Motor neuron (in vitro differentiated cells): ENCODE measurements at regions of chr11 and their contacts with region 1.

Region 1: GRCh38 chr11:102831489-102832440 is 11.6 kb downstream of the MMP3 start:
- ATAC-seq: peak in 3 of 8 experiments; percentile 83 to 91 (median 90)
- H3K4me3 ChIP-seq: no peak overlapping the region
- H3K27ac ChIP-seq: no peak overlapping the region
- H3K4me1 ChIP-seq: no peaks in the 10 kb centered on the region

Region 2: GRCh38 chr11:101848262-101848661 is 983.5 kb before region 1 on chr11:
- in situ Hi-C with region 1: no loop called
- ATAC-seq: no peak
- H3K4me3 ChIP-seq: no peak overlapping the region
- H3K27ac ChIP-seq: no peak overlapping the region
- H3K4me1 ChIP-seq: no peaks in the 10 kb centered on the region

Region 3: GRCh38 chr11:102940714-102941588 is 109.2 kb after region 1 on chr11:
- in situ Hi-C with region 1: loop called in 1 of 9 experiments (anchors 10 kb)
- ATAC-seq: peak in 3 of 8 experiments; percentile 84 to 96 (median 89)
- H3K4me3 ChIP-seq: no peak overlapping the region
- H3K27ac ChIP-seq: no peak overlapping the region
- H3K4me1 ChIP-seq: no peaks in the 10 kb centered on the region

Region 4: GRCh38 chr11:102955624-102956023 is 123.9 kb after region 1 on chr11 and contains the start of gene MMP13:
- in situ Hi-C with region 1: no loop called
- ATAC-seq: no peak
- H3K4me3 ChIP-seq: no peak within 1 kb of the TSS
- H3K27ac ChIP-seq: no peak within 1 kb of the TSS
- H3K4me1 ChIP-seq: no peaks in the 10 kb centered on the region
- total RNA-seq, gene MMP13: 0.20 to 1.2 (median 0.66) TPM in 3 of 8 experiments, not detected in the others

Region 5: GRCh38 chr11:103035791-103036434 is 204.1 kb after region 1 on chr11:
- in situ Hi-C with region 1: loop called in 1 of 9 experiments (anchors 25 kb)
- ATAC-seq: peak in 4 of 8 experiments; percentile 39 to 96 (median 83)
- H3K4me3 ChIP-seq: no peak overlapping the region
- H3K27ac ChIP-seq: no peak overlapping the region
- H3K4me1 ChIP-seq: no peaks in the 10 kb centered on the region

Region 6: GRCh38 chr11:103108933-103109817 is 277.4 kb after region 1 on chr11 and contains the start of gene DYNC2H1:
- in situ Hi-C with region 1: no loop called
- ATAC-seq: peak; percentile 91 to 99 (median 99)
- H3K4me3 ChIP-seq: peak within 1 kb of the TSS; percentile 51 to 60 (median 58)
- H3K27ac ChIP-seq: peak within 1 kb of the TSS; percentile 5 to 40
- H3K4me1 ChIP-seq: peaks cover 5 to 20% of the 10 kb centered on the region in 2 donors
- total RNA-seq, gene DYNC2H1: 19.7 to 51.0 (median 33.2) TPM